ENCODE measurements at regions of chr11 and their contacts with region 1.

Region 1: GRCh38 chr11:63838678-63839507 is at the start of gene MARK2:
- DNase-seq: peak; percentile 99
- H3K4me3 ChIP-seq: peak within 1 kb of the TSS; percentile 84
- H3K27ac ChIP-seq: peak within 1 kb of the TSS; percentile 84
- H3K4me1 ChIP-seq: peaks cover 29% of the 10 kb centered on the region
- H3K27me3 ChIP-seq: no peaks in the 10 kb centered on the region
- CTCF ChIP-seq: no peak
- total RNA-seq, gene MARK2: 86.8 to 96.8 TPM

Region 2: GRCh38 chr11:63573881-63574855 is 264.7 kb before region 1 on chr11:
- intact Hi-C with region 1: no loop called
- DNase-seq: peak; percentile 84
- H3K4me3 ChIP-seq: peak overlapping the region; percentile 4
- H3K27ac ChIP-seq: peak overlapping the region; percentile 85
- H3K4me1 ChIP-seq: peaks cover 5% of the 10 kb centered on the region
- H3K27me3 ChIP-seq: no peaks in the 10 kb centered on the region
- CTCF ChIP-seq: no peak

Region 3: GRCh38 chr11:63768237-63769043 is 70.5 kb before region 1 on chr11 and contains the start of gene ZFTA:
- intact Hi-C with region 1: loop called (anchors 5 kb)
- DNase-seq: peak; percentile 71
- H3K4me3 ChIP-seq: peak within 1 kb of the TSS; percentile 79
- H3K27ac ChIP-seq: peak within 1 kb of the TSS; percentile 67
- H3K4me1 ChIP-seq: peaks cover 27% of the 10 kb centered on the region
- H3K27me3 ChIP-seq: peaks cover 7% of the 10 kb centered on the region
- CTCF ChIP-seq: no peak
- total RNA-seq, gene ZFTA: 4.8 to 7.0 TPM

Region 4: GRCh38 chr11:63906585-63906984 is 67.7 kb after region 1 on chr11:
- intact Hi-C with region 1: loop called (anchors 5 kb)
- DNase-seq: no peak
- H3K4me3 ChIP-seq: no peak overlapping the region
- H3K27ac ChIP-seq: no peak overlapping the region
- H3K4me1 ChIP-seq: no peaks in the 10 kb centered on the region
- H3K27me3 ChIP-seq: no peaks in the 10 kb centered on the region
- CTCF ChIP-seq: peak; percentile 25

Region 5: GRCh38 chr11:63945477-63946163 is 106.7 kb after region 1 on chr11:
- intact Hi-C with region 1: loop called (anchors 1 kb)
- DNase-seq: peak; percentile 77
- H3K4me3 ChIP-seq: no peak overlapping the region
- H3K27ac ChIP-seq: no peak overlapping the region
- H3K4me1 ChIP-seq: peaks cover 3% of the 10 kb centered on the region
- H3K27me3 ChIP-seq: no peaks in the 10 kb centered on the region
- CTCF ChIP-seq: peak; percentile 74

Region 6: DNA sequence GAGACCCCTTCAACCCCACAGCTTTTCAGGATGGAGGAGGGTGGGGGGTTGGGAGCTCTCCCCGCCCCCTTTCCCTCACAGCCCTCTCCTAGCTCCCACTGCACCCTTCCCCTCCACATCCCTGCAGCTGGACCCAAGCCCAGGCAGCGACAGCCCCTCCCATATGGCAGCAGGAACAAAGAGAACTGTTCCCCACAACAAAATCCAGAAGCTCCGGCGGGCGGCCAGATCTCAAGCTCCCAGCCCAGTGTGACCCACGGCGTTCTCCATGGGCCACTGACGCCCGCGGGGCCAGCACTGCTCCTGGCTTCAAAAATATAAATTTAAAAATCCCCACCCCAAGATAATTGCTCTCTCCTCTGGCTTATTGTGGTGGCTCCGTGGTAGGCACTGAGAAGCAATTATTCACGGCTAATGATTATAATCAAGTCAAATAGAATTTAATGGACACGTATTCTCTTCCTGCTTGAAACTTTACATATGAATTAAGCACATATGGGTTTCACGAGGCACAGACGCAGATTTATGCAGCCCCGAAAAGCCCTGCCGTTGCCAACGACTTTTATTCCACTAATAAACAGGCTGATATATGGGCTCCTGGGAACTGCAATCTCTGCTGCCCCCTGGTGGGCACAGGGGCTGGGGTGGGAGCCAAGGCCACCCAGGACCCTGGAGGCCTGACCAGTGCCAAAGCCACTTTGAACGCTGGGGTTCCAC is 309.5 kb after region 1 on chr11:
- intact Hi-C with region 1: loop called (anchors 10 kb)
- DNase-seq: peak; percentile 72
- H3K4me3 ChIP-seq: no peak overlapping the region
- H3K27ac ChIP-seq: no peak overlapping the region
- H3K4me1 ChIP-seq: no peaks in the 10 kb centered on the region
- H3K27me3 ChIP-seq: no peaks in the 10 kb centered on the region
- CTCF ChIP-seq: peak; percentile 89

Region 7: DNA sequence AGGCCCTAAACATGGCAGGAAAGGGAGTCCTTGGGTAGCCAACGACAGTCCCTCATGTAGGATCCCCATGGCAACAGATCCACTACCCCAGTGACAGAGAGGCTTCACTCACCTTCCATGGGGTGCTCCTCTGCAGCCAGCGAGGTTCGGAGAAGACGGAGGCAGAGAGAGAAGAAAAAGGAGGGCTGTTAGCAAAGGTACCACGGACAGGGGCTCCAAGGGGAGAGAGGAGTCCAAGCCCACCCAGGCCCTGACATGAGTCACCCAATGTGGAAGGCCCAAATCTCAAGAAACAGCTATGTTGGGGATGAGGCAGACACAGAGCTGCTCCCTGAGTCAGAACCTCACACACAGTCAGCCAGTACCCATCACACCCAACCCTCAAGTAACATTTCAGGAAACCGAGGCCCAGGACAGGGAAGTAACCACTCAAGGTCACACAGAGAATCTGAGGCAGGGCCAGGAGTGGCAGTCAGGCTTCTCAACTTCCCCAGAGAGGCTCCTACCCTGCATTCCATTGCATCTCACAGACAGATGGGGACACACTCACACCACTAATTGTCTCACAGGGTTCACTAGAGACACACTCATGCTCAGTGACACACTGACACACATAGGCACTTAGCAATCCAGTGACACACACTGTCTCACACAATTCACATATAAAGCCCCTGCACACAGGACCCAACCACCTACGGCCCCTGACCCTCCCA is 858.9 kb after region 1 on chr11:
- intact Hi-C with region 1: no loop called
- DNase-seq: no peak
- H3K4me3 ChIP-seq: no peak overlapping the region
- H3K27ac ChIP-seq: no peak overlapping the region
- H3K4me1 ChIP-seq: no peaks in the 10 kb centered on the region
- H3K27me3 ChIP-seq: peaks cover 8% of the 10 kb centered on the region
- CTCF ChIP-seq: no peak

Measured in colonic mucosa (tissue), 4 donors.